Right ventricle myocardium superior (tissue), 1 donor: ENCODE measurements at regions of chr14 and their contacts with region 1.

Region 1: DNA sequence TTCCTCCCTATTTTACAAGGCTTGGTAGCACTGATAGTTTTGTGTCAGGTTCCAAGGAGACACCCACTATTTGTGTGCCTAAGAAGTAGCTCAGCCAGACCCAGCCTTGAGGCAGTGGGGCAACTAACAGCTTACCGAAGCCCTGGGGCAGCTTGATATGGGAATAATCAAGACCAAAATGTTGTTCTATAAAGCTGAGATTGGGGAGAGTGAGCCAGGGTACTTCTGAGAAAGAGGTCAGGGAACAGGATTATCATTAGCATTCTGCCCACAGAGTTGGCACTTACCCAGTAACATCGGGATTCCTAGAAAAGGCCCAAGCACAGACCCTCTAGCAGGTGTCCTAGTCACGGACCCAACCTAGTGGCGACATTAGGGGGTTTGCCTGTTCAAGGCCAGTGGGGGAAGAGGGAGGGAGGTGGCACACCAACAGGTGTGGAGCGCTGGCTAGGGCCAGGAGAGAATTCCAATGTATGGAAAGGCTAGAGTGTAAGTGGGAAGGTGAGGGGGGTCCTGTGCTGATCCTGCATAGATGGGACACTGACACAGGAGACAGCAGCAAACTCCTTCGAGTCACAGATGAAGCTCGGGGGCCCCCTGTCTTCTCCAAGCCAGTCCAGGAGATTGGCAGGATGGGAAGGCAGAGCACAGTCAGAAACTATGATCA is 4.9 kb downstream of the PPP1R3E start:
- DNase-seq: no peak
- ATAC-seq: no peak

Region 2: DNA sequence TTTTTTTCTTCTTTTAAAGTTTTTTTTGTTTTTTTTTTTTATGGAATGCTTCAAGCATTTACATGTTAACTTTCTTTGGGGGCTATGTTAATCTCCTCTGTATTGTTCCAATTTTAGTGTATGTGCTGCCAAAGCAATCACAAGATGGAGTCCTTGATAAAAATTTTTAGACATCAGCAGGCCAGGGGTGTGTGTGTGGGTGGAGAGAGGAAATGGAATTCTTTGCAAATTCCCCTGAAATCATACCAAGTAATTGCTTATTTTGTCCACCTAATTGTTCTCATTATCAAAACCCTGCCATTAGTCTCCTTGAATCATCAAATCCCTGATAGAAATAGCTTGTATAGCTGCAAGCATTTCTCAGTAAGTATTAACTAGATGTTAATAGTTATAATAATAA is 38.3 kb before region 1 on chr14:
- intact Hi-C with region 1: loop called (anchors 2 kb)
- DNase-seq: no peak
- ATAC-seq: no peak